Activated CD4-positive, alpha-beta T cell treated with anti-CD3 and anti-CD28 coated beads for 36 hours (primary cell): ENCODE measurements at regions of chr17 and their contacts with region 1.

Region 1: DNA sequence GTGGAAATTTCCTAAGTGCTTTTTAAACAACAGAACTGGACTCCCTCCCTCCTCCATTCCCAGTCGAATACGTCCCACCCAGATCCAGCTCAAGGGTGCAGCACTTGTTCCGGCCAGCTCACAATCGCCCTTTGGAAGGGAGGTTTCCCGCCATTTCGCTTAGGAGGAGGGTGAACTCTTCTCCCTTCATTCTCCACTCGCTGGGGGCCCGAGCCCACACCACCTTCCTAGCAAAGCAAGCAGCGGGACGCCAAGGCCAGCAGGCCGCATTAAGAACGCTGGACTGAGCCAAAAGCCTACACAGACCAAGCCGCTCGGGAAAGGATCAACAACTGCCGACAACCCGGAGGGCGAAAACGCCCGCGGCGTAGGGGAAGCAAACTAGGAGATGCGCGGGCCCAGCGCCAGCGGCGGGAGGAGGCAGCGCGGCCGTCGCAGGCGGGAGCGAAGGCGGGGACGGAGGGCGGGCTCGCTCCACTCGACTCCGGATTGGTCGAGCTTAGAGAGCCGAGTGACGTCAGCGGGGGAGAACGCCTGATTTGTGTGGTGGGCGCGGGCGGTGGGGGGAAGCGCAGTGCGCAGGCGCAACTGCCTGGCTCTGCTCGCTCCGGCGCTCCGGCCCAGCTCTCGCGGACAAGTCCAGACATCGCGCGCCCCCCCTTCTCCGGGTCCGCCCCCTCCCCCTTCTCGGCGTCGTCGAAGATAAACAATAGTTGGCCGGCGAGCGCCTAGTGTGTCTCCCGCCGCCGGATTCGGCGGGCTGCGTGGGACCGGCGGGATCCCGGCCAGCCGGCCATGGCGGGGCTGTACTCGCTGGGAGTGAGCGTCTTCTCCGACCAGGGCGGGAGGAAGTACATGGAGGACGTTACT is at the start of gene PPM1D:
- DNase-seq: peak; percentile 99
- ATAC-seq: peak; percentile 94
- H3K4me3 Mint-ChIP-seq: peak within 1 kb of the TSS; percentile 95
- H3K27ac Mint-ChIP-seq: peak within 1 kb of the TSS; percentile 97
- H3K4me1 Mint-ChIP-seq: peaks cover 31% of the 10 kb centered on the region
- H3K27me3 Mint-ChIP-seq: no peaks in the 10 kb centered on the region
- total RNA-seq, gene PPM1D: 9.3 to 9.7 TPM

Region 2: GRCh38 chr17:60077672-60078519 is 522.0 kb before region 1 on chr17:
- CTCF ChIA-PET with region 1: no interaction called
- POLR2A ChIA-PET with region 1: no interaction called
- intact Hi-C with region 1: loop called in 1 of 2 experiments (anchors 1 kb)
- DNase-seq: peak; percentile 81
- ATAC-seq: peak; percentile 73
- H3K4me3 Mint-ChIP-seq: peak overlapping the region; percentile 84
- H3K27ac Mint-ChIP-seq: peak overlapping the region; percentile 95
- H3K4me1 Mint-ChIP-seq: peaks cover 19% of the 10 kb centered on the region
- H3K27me3 Mint-ChIP-seq: no peaks in the 10 kb centered on the region

Region 3: GRCh38 chr17:60525685-60526514 is 74.0 kb before region 1 on chr17 and contains the start of gene APPBP2:
- CTCF ChIA-PET with region 1: interaction called, 5 read pairs
- POLR2A ChIA-PET with region 1: interaction called, 6 read pairs
- intact Hi-C with region 1: loop called (anchors 1 to 2 kb)
- DNase-seq: peak; percentile 80
- ATAC-seq: peak; percentile 82
- H3K4me3 Mint-ChIP-seq: peak within 1 kb of the TSS; percentile 96
- H3K27ac Mint-ChIP-seq: peak within 1 kb of the TSS; percentile 97
- H3K4me1 Mint-ChIP-seq: peaks cover 30% of the 10 kb centered on the region
- H3K27me3 Mint-ChIP-seq: no peaks in the 10 kb centered on the region
- total RNA-seq, gene APPBP2: 21.4 to 28.8 TPM

Region 4: DNA sequence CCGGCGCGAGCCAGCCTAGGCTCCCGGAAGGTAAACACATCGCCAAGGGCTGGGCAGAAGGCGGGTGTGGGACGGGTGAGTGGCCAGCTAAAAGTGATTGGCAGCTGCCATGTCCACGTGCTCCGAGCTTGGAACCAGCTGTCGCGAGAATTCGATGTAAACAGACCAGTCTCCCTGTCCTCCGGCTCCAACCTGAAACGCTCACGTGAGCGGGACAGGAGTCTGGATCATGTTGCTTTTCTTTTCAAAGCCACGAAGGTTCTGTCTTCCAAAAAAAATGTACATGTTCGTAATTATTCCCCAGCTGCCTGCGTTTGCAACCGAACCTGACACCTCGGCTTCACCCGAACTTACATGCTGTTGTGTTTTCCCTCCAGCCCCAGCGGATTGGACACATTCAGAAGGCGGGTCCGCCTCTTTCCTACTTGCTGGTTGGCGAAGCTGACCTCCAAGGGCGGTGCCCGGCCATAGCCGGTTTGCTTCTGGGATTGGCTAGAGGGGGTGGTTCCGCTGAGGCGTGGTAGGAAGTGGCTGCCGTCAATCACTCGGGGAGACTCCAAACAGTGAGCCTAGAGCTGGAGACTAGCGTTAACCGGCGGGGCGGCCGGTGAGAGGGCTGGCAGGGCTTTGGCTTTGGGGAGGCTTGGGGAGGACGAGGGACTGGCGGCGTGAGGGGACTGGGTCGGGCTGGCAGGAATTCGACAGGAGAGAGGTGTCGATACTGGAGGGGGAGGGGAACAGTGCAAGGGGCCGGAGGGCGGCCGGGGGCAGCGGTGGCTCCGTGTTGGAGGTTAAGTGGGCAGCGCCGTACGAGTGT is 77.7 kb after region 1 on chr17 and contains the start of gene BCAS3:
- CTCF ChIA-PET with region 1: interaction called, 4 read pairs
- POLR2A ChIA-PET with region 1: interaction called, 8 read pairs
- intact Hi-C with region 1: loop called (anchors 1 kb)
- DNase-seq: peak; percentile 98
- ATAC-seq: peak; percentile 97
- H3K4me3 Mint-ChIP-seq: peak within 1 kb of the TSS; percentile 95
- H3K27ac Mint-ChIP-seq: peak within 1 kb of the TSS; percentile 84
- H3K4me1 Mint-ChIP-seq: peaks cover 16% of the 10 kb centered on the region
- H3K27me3 Mint-ChIP-seq: no peaks in the 10 kb centered on the region
- total RNA-seq, gene BCAS3: 7.2 to 7.5 TPM